ENCODE measurements at regions of chr4 and their contacts with region 1.

Region 1: DNA sequence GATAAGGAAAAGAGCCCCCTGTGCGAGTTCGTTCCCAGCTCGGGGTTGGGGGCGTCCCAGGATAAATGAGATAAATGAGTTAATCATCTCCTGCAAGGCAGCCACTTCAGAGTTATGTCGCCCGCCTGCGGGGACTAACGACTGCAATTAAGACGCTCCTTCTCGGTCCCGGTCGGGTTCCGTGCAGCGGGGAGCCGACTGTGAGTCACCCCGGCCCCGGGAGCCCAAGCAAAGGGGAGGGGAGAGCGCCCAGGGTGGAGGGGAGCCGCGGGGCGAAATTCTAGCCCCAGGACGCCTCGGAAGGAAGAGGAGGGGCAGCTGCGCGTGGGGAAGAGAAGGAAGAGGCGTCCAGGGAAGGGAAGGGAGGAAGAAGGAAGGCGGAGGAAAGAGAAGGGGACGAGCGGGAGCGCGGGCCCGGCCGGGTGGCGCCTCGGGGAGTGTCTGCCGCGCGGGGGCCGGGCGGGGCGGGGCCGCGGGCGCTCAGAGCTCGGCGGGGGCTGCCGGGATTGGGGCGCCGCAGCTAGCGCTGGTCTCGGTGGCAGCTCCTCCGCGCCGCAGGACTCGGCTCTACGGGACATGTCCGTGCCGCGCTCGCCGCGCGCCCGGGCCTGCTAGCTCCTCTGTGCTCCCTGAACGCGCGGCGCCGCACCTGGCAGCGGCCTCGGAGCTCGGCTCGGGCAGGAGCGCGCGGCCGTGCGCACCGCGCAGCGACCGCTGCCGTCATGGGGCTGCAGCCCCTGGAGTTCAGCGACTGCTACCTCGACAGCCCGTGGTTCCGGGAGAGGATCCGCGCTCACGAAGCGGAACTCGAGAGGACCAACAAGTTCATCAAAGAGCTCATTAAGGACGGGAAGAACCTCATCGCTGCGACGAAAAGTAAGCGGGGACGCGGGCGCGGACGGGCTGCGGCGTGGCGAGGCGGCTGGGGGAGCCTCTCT is at the start of gene ARHGAP10:
- DNase-seq: peak; percentile 81 to 89 (median 81)
- ATAC-seq: peak; percentile 27 to 88 (median 80)
- H3K4me3 ChIP-seq: peak within 1 kb of the TSS; percentile 67 to 97 (median 86)
- H3K27ac ChIP-seq: peak within 1 kb of the TSS; percentile 83 to 96 (median 93)
- H3K4me1 ChIP-seq: peaks cover 0 to 38% (median 28%) of the 10 kb centered on the region in 12 donors
- H3K27me3 ChIP-seq: no peaks in the 10 kb centered on the region
- CTCF ChIP-seq: no peak
- POLR2A ChIP-seq: peak in 1 of 2 donors; percentile 67
- total RNA-seq, gene ARHGAP10: 30.6 to 64.2 (median 51.7) TPM

Region 2: DNA sequence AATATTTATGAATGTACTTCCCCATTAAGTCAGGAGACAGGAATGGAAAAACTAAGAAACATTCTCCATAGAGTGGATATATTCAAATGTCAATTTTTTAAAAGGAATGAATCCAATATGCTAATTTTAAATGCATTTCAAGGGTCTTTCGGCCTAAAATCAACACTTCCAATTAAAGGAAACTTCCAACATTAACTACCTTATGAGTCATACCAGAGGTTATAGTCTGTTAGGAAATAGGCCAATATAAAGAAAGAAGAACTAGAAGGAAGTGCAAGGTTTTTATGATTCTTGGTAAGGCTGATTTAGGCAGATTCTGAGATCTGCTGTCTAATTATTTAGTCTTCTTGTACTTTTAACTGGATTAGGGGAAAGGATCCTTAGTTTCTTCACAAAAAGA is 511.0 kb before region 1 on chr4:
- intact Hi-C with region 1: no loop called
- DNase-seq: no peak
- ATAC-seq: no peak
- H3K4me3 ChIP-seq: no peak overlapping the region
- H3K27ac ChIP-seq: no peak overlapping the region
- H3K4me1 ChIP-seq: peaks cover 0 to 5% (median 0%) of the 10 kb centered on the region in 12 donors
- H3K27me3 ChIP-seq: no peaks in the 10 kb centered on the region
- CTCF ChIP-seq: no peak
- POLR2A ChIP-seq: no peak

Region 3: GRCh38 chr4:147518846-147519767 is 212.7 kb before region 1 on chr4:
- intact Hi-C with region 1: no loop called
- DNase-seq: peak in 3 of 5 donors; percentile 25 to 45 (median 32)
- ATAC-seq: peak in 2 of 4 donors; percentile 50 to 62
- H3K4me3 ChIP-seq: no peak overlapping the region
- H3K27ac ChIP-seq: no peak overlapping the region
- H3K4me1 ChIP-seq: peaks cover 0 to 28% (median 4%) of the 10 kb centered on the region in 12 donors
- H3K27me3 ChIP-seq: no peaks in the 10 kb centered on the region
- CTCF ChIP-seq: peak; percentile 52 to 80 (median 65)
- POLR2A ChIP-seq: no peak

Region 4: GRCh38 chr4:147780137-147780777 is 48.4 kb after region 1 on chr4:
- intact Hi-C with region 1: loop called in 1 of 10 experiments (anchors 10 kb)
- DNase-seq: peak in 2 of 5 donors; percentile 55 to 57
- ATAC-seq: peak; percentile 50 to 68 (median 52)
- H3K4me3 ChIP-seq: peak overlapping the region in 1 of 12 donors; percentile 28
- H3K27ac ChIP-seq: peak overlapping the region in 6 of 12 donors; percentile 2 to 74 (median 20)
- H3K4me1 ChIP-seq: peaks cover 0 to 67% (median 57%) of the 10 kb centered on the region in 12 donors
- H3K27me3 ChIP-seq: no peaks in the 10 kb centered on the region
- CTCF ChIP-seq: no peak
- POLR2A ChIP-seq: no peak

Region 5: DNA sequence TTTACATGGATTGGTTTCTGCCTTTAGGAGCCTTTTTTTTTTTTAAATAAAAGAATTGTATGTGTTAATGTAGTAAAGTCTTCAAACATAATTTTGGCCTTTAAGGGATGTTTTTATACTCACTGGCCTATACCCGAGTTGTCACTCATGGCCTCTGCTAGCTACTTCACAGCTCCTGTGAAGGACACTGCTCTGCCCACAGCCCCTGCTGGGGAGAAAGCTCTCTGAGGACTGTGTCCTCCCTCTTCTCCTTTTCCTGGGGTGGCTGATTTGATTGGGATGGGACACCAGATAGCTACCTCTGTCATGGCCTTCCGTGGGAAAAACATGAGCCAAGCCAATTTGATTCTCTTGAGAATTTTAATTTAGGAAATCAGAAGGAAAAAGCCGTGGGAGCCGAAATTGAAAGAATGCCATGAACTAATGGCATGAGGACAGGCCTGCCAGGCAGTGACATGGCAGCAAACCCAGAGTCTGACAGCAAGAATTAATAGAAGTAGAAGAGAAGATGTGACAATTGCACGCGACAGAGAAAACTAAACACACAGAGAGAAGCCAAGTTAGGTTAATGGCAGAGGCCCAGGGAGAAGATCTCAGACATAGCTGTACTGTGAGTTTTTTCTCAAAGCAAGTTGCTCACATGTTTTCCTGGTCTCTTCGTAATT is 81.4 kb after region 1 on chr4:
- intact Hi-C with region 1: loop called in 1 of 10 experiments (anchors 10 kb)
- DNase-seq: no peak
- ATAC-seq: peak in 3 of 4 donors; percentile 38 to 55 (median 54)
- H3K4me3 ChIP-seq: no peak overlapping the region
- H3K27ac ChIP-seq: peak overlapping the region; percentile 26 to 90 (median 76)
- H3K4me1 ChIP-seq: peaks cover 3 to 95% (median 80%) of the 10 kb centered on the region in 12 donors
- H3K27me3 ChIP-seq: no peaks in the 10 kb centered on the region
- CTCF ChIP-seq: peak in 2 of 12 donors; percentile 7 to 16
- POLR2A ChIP-seq: no peak

Region 6: DNA sequence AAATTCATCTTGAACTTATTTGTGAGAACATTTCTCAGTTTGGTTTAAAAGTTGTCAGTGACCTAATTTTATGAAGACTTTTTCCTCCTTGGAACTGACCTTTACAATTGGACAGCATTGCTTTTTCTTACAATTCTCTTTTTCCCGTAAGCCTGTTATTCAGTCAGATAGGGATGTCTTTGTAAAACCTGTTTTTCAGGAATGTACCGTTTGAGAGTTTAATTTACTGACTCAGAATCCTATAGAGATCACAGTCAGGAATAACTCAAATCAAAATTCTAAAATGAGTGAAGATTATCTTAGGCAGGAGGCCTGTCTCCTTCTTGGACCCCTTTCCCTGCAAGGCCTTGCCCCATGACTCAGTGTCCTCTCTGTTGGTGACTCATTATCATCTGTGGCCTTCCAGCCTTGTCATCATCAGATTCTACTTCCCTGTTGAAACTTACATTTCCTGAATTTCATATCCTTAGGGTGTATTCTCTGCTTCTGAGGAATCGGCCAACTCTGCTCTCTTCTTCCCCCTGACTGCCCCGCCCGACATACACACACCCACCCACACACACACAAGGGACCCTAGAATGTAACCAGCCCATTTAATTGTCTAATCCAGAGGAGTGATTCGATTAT is 99.8 kb after region 1 on chr4:
- intact Hi-C with region 1: loop called in 7 of 10 experiments (anchors 5 to 10 kb)
- DNase-seq: peak in 3 of 5 donors; percentile 39 to 54 (median 43)
- ATAC-seq: peak; percentile 31 to 77 (median 64)
- H3K4me3 ChIP-seq: no peak overlapping the region
- H3K27ac ChIP-seq: peak overlapping the region; percentile 75 to 97 (median 88)
- H3K4me1 ChIP-seq: peaks cover 0 to 76% (median 51%) of the 10 kb centered on the region in 12 donors
- H3K27me3 ChIP-seq: no peaks in the 10 kb centered on the region
- CTCF ChIP-seq: no peak
- POLR2A ChIP-seq: no peak

Region 7: DNA sequence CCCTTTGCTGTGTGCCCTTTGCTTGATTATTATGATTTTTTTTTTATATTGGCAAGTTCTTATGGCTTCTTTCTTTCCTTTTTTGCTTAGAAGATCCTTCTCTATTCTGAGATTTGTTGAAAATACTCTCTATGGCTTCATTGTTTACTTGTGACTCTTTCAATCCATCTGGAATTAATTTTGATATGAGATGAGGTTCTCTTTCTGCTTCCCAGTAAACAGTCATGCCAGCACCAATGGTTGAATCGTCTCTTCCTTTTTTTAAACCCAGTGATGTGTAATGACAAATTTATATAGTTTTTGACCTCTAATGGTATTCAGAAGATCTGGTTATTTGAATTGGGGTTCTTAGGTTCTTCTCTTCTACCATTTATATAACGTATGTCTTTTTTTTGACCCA is 121.9 kb after region 1 on chr4:
- intact Hi-C with region 1: loop called in 1 of 10 experiments (anchors 5 kb)
- DNase-seq: no peak
- ATAC-seq: peak in 2 of 4 donors; percentile 34 to 41
- H3K4me3 ChIP-seq: no peak overlapping the region
- H3K27ac ChIP-seq: peak overlapping the region in 11 of 12 donors; percentile 5 to 82 (median 42)
- H3K4me1 ChIP-seq: peaks cover 0 to 60% (median 32%) of the 10 kb centered on the region in 12 donors
- H3K27me3 ChIP-seq: no peaks in the 10 kb centered on the region
- CTCF ChIP-seq: no peak
- POLR2A ChIP-seq: no peak

Region 8: DNA sequence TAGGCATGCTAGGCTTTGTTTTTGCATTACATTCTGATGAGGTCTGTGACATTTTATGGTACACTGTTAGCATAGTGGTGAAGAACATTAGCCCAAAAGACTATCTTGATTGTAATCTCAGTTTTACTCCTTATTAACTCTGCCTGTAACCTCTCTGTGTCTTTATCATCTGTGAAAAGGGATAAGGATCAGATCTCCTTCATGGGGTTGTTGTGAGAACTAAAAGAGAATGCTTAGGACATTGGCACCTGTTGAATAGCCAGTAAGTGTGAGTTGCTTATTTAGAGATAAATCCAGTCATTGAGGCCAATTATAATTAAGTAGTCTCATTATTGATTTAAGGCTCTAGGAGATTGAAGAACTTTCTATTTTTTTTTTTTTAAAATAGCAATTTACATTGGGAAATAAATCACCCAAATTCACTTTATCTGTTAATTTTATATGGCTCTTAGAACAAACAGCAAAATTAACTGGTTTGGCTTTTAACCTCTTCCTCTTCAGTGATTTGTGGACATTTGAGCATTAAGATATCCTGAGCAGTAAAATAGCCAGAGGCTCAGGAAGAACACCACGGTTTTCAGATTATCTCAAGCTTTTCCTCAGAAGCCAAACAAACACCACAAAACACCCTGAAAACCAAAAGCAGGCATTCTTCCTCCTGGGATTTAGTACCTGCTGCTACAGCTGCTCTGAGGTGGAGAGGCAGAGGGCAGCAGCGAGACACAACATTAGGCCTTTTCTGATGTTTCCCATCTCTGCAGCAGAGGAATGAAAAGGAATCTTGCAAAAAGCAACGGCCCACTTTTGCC is 193.0 kb after region 1 on chr4:
- intact Hi-C with region 1: no loop called
- DNase-seq: peak in 1 of 5 donors; percentile 20
- ATAC-seq: no peak
- H3K4me3 ChIP-seq: no peak overlapping the region
- H3K27ac ChIP-seq: no peak overlapping the region
- H3K4me1 ChIP-seq: peaks cover 0 to 25% (median 4%) of the 10 kb centered on the region in 12 donors
- H3K27me3 ChIP-seq: no peaks in the 10 kb centered on the region
- CTCF ChIP-seq: peak in 10 of 12 donors; percentile 23 to 57 (median 43)
- POLR2A ChIP-seq: no peak